Breast epithelium (tissue), 4 donors: ENCODE measurements at regions of chr22 and their contacts with region 1.

Region 1: DNA sequence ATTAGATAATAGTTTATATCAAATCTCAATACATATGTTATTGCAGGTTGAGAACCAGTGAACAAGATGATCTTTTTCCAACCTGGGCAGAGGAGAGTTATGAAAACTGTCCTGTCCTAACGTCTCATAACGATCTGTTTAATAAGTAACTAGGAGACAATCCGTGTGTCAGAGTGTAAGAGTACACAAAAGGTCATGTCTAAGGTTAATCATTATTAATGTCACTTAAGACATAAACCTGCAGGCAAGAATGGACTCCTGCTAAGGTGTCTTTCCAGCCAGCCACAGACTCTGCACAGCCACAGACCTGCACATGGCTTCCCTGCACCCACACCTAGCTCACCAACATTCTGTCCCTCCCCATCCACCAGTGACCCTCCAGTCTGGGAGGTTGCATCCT is 10.1 kb downstream of the SLC5A4 start:
- DNase-seq: no peak
- H3K4me3 ChIP-seq: no peak overlapping the region
- H3K27ac ChIP-seq: no peak overlapping the region
- H3K4me1 ChIP-seq: no peaks in the 10 kb centered on the region
- H3K27me3 ChIP-seq: no peaks in the 10 kb centered on the region
- CTCF ChIP-seq: no peak
- POLR2A ChIP-seq: no peak

Region 2: GRCh38 chr22:31768422-31769059 is 476.5 kb before region 1 on chr22:
- intact Hi-C with region 1: loop called (anchors 10 kb)
- DNase-seq: no peak
- H3K4me3 ChIP-seq: no peak overlapping the region
- H3K27ac ChIP-seq: no peak overlapping the region
- H3K4me1 ChIP-seq: no peaks in the 10 kb centered on the region
- H3K27me3 ChIP-seq: no peaks in the 10 kb centered on the region
- CTCF ChIP-seq: no peak
- POLR2A ChIP-seq: no peak